ENCODE measurements at regions of chr1 and their contacts with region 1.

Region 1: GRCh38 chr1:35451125-35451528 is 106.1 kb downstream of the KIAA0319L start:
- DNase-seq: peak; percentile 63 to 81 (median 74)
- H3K4me3 ChIP-seq: no peak overlapping the region
- H3K27ac ChIP-seq: no peak overlapping the region
- H3K4me1 ChIP-seq: peaks cover 12 to 26% (median 16%) of the 10 kb centered on the region in 4 experiments
- H3K27me3 ChIP-seq: no peaks in the 10 kb centered on the region

Region 2: DNA sequence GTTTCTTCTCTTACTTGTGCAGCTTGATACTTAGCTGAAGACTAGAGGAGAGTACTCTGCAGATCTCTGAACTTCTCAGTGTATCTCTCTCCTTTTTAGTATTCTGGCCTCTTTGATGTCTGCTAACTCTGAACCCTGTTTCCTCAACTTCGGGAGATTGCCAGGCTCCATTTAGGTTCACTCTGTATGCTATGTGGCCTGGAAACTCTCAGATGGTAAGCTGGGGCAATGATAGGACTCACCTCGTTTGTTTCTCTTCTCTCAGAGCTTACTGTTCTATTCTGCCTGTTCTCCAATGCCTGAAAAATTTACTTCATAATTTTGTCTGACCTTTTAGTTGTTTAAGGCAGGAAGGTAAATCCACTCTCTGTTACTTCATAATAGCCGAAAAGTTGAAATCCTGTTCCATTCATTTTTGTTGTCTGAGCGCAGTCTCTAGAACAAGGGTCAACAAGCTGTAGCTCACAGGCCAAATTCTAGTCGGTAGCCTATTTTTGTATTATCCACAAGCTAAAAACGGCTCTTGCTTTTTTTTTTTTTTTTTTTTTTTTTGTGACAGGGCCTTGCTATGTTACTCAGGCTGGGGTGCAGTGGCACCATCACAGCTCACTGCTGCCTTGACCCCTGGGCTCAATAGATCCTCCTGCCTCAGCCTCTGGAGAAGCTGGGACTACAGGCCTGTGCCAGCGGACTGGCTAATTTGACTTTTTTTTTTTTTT is 149.3 kb before region 1 on chr1:
- CTCF ChIA-PET with region 1: no interaction called
- POLR2A ChIA-PET with region 1: no interaction called
- DNase-seq: no peak
- H3K4me3 ChIP-seq: no peak overlapping the region
- H3K27ac ChIP-seq: no peak overlapping the region
- H3K4me1 ChIP-seq: peaks cover 0 to 18% (median 8%) of the 10 kb centered on the region in 4 experiments
- H3K27me3 ChIP-seq: no peaks in the 10 kb centered on the region

Region 3: GRCh38 chr1:35364741-35365140 is 86.4 kb before region 1 on chr1:
- CTCF ChIA-PET with region 1: no interaction called
- POLR2A ChIA-PET with region 1: no interaction called
- DNase-seq: no peak
- H3K4me3 ChIP-seq: no peak overlapping the region
- H3K27ac ChIP-seq: no peak overlapping the region
- H3K4me1 ChIP-seq: peaks cover 2 to 15% (median 7%) of the 10 kb centered on the region in 4 experiments
- H3K27me3 ChIP-seq: no peaks in the 10 kb centered on the region

Region 4: GRCh38 chr1:35431173-35431599 is 19.9 kb before region 1 on chr1:
- CTCF ChIA-PET with region 1: interaction called, 11 read pairs
- POLR2A ChIA-PET with region 1: no interaction called
- DNase-seq: peak in 2 of 3 donors; percentile 15 to 27
- H3K4me3 ChIP-seq: no peak overlapping the region
- H3K27ac ChIP-seq: no peak overlapping the region
- H3K4me1 ChIP-seq: peaks cover 0 to 5% (median 2%) of the 10 kb centered on the region in 4 experiments
- H3K27me3 ChIP-seq: no peaks in the 10 kb centered on the region

Region 5: DNA sequence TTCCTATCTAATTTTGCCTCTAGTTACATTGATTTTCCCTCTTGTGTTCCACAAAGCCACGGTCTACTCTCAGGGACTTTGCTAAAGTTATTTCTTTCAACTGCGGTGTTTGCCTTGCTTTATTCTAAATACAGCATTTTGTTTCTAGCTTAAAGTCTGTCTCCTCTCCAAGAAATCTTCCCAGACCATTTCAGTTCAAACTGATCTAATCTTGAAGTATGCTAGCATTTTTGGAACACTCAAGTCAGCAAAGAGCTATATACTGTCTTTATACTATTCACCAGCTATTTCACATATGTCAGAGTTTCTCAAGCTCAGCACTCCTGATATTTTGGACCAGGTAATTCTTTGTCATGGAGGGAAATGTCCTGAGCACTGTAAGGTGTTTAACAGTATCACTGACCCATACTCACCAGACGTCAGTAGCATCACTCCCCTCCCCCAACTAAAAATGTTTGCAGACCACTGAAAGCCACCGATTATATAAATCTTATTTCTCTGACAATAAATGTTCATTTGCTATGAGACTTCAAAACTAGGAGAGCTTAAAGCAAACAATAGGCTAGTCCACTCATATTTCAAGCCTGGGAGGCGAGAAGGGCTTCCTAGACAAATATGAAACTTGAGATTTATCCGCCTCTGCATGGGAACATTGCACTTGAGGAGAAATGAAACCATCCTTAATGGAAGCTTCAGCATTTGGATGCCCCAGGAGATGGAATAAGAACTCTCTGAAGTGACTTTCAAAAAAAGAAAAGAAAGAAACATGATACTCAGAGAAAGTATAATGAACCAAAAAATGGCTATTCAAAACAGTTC is 24.9 kb after region 1 on chr1:
- CTCF ChIA-PET with region 1: interaction called, 15 read pairs
- POLR2A ChIA-PET with region 1: no interaction called
- DNase-seq: no peak
- H3K4me3 ChIP-seq: no peak overlapping the region
- H3K27ac ChIP-seq: no peak overlapping the region
- H3K4me1 ChIP-seq: no peaks in the 10 kb centered on the region
- H3K27me3 ChIP-seq: no peaks in the 10 kb centered on the region

Region 6: DNA sequence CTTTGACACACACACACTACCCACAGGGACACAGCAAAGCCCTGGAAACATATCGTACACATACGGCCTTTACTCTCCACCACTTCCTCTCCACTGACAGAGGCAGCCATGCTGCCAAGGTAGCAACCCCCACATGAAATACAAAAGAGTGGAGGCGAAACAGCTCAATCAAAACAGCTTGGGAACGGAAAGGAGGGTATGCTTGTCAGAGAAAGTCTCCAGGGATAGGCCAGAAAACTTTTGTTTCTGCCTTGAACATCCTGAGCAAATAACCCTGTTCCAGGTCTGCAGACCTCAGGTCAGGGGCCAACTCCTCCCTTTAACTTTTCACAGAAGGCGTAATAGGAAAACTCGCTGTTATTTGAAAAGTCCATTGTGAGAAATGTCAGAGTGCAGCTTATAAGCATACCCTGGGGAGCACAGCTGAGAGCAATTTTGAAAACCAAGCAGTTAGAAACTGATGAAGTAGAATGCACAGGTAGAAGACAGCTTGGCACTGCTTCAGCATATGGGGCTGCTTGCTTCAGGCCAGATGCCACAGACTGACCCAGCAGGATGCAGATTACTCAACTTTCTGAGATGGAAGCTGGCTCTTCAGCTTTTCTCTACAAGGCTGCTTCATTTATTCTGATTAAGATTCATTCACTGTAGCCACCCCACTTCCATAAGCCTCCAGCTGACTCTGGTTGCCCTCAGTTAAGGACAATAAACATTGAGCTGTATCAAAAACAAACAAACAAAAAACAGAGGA is 88.1 kb after region 1 on chr1:
- CTCF ChIA-PET with region 1: interaction called, 54 read pairs
- POLR2A ChIA-PET with region 1: no interaction called
- DNase-seq: peak in 2 of 3 donors; percentile 34 to 44
- H3K4me3 ChIP-seq: no peak overlapping the region
- H3K27ac ChIP-seq: no peak overlapping the region
- H3K4me1 ChIP-seq: peaks cover 0 to 19% (median 7%) of the 10 kb centered on the region in 4 experiments
- H3K27me3 ChIP-seq: no peaks in the 10 kb centered on the region

Region 7: GRCh38 chr1:35557292-35558063 is 106.4 kb after region 1 on chr1 and contains the starts of genes KIAA0319L and NCDN:
- CTCF ChIA-PET with region 1: interaction called, 13 read pairs
- POLR2A ChIA-PET with region 1: no interaction called
- DNase-seq: peak; percentile 97 to 99 (median 98)
- H3K4me3 ChIP-seq: peak within 1 kb of the TSS; percentile 82 to 95 (median 87)
- H3K27ac ChIP-seq: peak within 1 kb of the TSS; percentile 33 to 85
- H3K4me1 ChIP-seq: peaks cover 8 to 35% (median 33%) of the 10 kb centered on the region in 4 experiments
- H3K27me3 ChIP-seq: no peaks in the 10 kb centered on the region

Region 8: GRCh38 chr1:35726450-35727433 is 275.6 kb after region 1 on chr1:
- CTCF ChIA-PET with region 1: interaction called, 12 read pairs
- POLR2A ChIA-PET with region 1: no interaction called
- DNase-seq: peak; percentile 71 to 82 (median 76)
- H3K4me3 ChIP-seq: no peak overlapping the region
- H3K27ac ChIP-seq: no peak overlapping the region
- H3K4me1 ChIP-seq: peaks cover 0 to 23% (median 14%) of the 10 kb centered on the region in 4 experiments
- H3K27me3 ChIP-seq: no peaks in the 10 kb centered on the region

Region 9: GRCh38 chr1:35747938-35748702 is 297.0 kb after region 1 on chr1:
- CTCF ChIA-PET with region 1: no interaction called
- POLR2A ChIA-PET with region 1: no interaction called
- DNase-seq: no peak
- H3K4me3 ChIP-seq: no peak overlapping the region
- H3K27ac ChIP-seq: no peak overlapping the region
- H3K4me1 ChIP-seq: no peaks in the 10 kb centered on the region
- H3K27me3 ChIP-seq: no peaks in the 10 kb centered on the region

Measured in common myeloid progenitor, CD34-positive (primary cell).